PC-3 (cell line): ENCODE measurements at regions of chr21 and their contacts with region 1.

Region 1: GRCh38 chr21:31580866-31581276 is 78.6 kb upstream of the SOD1 start:
- DNase-seq: peak; percentile 88
- ATAC-seq: peak; percentile 92
- H3K4me3 ChIP-seq: no peak overlapping the region
- H3K27ac ChIP-seq: no peak overlapping the region
- H3K4me1 ChIP-seq: no peaks in the 10 kb centered on the region
- H3K27me3 ChIP-seq: no peaks in the 10 kb centered on the region
- CTCF ChIP-seq: peak; percentile 89

Region 2: DNA sequence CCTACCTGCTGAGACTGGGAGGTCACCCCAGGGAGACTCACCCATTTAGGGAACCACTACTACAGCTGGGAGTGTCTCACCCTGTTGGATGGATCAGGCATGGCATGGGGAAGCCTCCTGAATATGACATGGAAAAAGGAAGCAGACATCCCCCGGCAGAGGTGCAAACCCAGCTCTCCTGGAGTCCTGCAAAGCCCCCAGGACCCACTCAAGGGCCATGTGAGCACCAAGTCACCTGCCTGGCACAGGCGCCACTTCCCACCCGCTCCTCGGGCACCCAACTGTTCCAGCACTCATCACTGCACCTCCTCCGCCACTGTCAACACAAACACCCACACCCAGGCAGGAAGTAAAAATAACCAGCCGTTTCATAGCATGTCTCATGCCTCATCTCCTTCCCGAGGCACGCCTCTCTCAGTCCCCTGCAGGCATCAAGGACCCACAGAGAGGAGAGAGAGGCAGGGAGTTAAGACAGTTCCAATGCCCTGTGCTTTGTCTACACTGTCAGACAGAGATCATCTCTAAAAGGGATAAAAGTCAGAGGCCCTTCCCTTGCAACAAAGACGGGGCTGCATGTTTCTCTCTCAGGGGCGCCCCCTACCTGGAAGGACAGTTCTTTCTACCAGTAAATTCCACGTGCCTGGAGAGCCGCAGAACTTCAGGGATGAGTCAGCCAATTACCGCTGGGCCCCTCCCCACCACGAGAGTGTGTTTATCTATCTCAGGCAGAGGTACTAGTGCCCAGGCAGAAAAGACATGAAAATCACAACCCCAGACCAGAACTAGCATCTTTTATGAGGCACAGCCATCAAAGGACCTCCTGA is 71.5 kb before region 1 on chr21:
- CTCF ChIA-PET with region 1: no interaction called
- POLR2A ChIA-PET with region 1: no interaction called
- intact Hi-C with region 1: loop called (anchors 5 kb)
- DNase-seq: peak; percentile 81
- ATAC-seq: peak; percentile 89
- H3K4me3 ChIP-seq: peak overlapping the region; percentile 28; the same call in 1 of the 2 replicates
- H3K27ac ChIP-seq: peak overlapping the region; percentile 75
- H3K4me1 ChIP-seq: peaks cover 15% of the 10 kb centered on the region
- H3K27me3 ChIP-seq: no peaks in the 10 kb centered on the region
- CTCF ChIP-seq: peak; percentile 86